Caco-2 (cell line): ENCODE measurements at regions of chr4 and their contacts with region 1.

Region 1: DNA sequence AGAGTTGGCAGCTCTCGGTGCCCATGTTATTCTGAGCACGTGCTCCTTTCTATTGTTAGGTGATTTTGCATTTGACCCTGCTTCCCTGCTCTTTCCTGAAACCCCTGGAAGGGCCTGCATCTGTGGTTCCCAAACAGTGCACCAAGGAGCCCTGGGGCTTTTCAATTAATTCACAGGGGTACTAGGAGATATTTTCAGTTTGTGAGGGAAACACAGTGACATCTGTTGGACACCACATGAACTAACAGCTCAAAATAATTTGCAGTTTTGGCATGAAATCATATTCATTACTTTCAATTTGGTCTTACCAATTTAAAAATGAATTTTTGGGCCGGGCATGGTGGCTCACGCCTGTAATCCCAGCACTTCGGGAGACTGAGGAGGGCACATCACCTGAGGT is 156.6 kb downstream of the GATB start:
- DNase-seq: no peak
- H3K4me3 ChIP-seq: no peak overlapping the region
- H3K4me3 Mint-ChIP-seq: no peak overlapping the region
- H3K27ac Mint-ChIP-seq: no peak overlapping the region
- H3K4me1 ChIP-seq: peaks cover 18% of the 10 kb centered on the region
- H3K4me1 Mint-ChIP-seq: peaks cover 3% of the 10 kb centered on the region
- H3K27me3 ChIP-seq: no peaks in the 10 kb centered on the region
- H3K27me3 Mint-ChIP-seq: no peaks in the 10 kb centered on the region
- CTCF ChIP-seq: peak; percentile 23 to 62

Region 2: DNA sequence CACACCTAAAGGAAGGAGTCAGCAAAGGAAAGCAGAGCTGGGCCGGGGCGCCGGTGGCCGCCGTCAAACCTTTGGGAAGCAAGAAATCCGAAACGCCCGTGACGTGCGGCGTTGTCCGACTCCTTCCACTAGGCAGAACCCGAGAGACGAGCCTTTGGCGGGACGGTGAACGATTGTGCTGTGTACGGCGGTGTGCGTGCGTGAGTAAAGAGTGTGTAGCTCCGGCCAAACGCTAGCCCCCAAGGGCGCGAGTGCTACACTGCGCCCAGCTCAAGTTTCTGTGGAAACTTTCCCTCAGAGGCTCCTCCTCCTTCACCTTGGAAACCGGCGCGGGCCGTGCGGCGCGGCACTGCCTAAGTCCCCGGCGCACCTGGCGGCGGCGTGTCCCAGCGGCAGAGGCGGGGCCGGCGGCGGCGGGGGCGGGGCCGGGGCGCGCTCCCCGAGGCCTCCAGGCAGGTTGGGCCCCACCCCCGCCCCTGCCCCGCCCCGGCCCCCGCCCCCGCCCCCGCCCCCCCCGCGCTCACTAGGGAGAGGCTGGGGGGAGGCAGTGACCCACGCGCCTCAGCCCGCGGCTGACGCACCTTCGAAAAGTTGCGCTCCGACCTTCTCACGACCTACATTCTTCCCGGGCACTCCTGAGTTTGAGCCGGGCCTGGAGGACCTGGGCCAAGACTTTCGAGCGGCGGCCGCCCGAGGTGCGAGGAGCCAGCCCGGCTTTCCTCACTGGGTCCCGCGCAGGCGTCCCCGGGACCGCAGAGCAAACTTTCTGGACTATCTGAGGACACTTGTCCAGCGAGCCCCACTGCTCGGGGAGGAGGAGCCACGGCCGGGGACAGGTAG is 195.4 kb before region 1 on chr4 and contains the start of gene FHIP1A:
- CTCF ChIA-PET with region 1: no interaction called
- POLR2A ChIA-PET with region 1: interaction called, 3 read pairs
- intact Hi-C with region 1: loop called (anchors 5 kb)
- DNase-seq: peak; percentile 95 to 96
- H3K4me3 ChIP-seq: peak within 1 kb of the TSS; percentile 80
- H3K4me3 Mint-ChIP-seq: peak within 1 kb of the TSS; percentile 86
- H3K27ac Mint-ChIP-seq: peak within 1 kb of the TSS; percentile 85
- H3K4me1 ChIP-seq: peaks cover 11% of the 10 kb centered on the region; the same call in 1 of the 2 replicates
- H3K4me1 Mint-ChIP-seq: no peaks in the 10 kb centered on the region
- H3K27me3 ChIP-seq: no peaks in the 10 kb centered on the region
- H3K27me3 Mint-ChIP-seq: no peaks in the 10 kb centered on the region
- CTCF ChIP-seq: peak in 1 of 2 experiments; percentile 12
- total RNA-seq, gene FHIP1A: 18.9 and 22.3 TPM in 2 replicates

Region 3: DNA sequence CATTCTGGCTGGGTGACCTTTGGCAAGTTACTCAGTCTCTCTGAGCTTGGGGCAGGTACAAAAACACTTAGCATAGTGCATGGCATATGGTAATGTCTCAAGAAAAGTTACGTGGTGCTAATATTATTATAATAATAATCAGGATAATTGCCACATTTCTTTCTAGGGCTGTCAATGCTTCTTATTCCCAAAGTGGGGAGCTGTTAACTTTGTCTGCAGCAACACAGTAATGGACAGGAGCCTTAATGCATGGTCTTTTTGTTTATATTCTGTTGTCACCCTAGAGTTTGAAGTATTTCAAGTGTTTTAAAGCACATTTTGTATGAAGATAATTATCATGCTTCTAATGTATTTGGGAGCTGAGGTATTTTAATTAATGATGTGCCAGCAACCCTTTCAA is 73.5 kb before region 1 on chr4:
- CTCF ChIA-PET with region 1: no interaction called
- POLR2A ChIA-PET with region 1: no interaction called
- intact Hi-C with region 1: loop called (anchors 2 kb)
- DNase-seq: no peak
- H3K4me3 ChIP-seq: no peak overlapping the region
- H3K4me3 Mint-ChIP-seq: no peak overlapping the region
- H3K27ac Mint-ChIP-seq: no peak overlapping the region
- H3K4me1 ChIP-seq: no peaks in the 10 kb centered on the region
- H3K4me1 Mint-ChIP-seq: no peaks in the 10 kb centered on the region
- H3K27me3 ChIP-seq: no peaks in the 10 kb centered on the region
- H3K27me3 Mint-ChIP-seq: no peaks in the 10 kb centered on the region
- CTCF ChIP-seq: peak in 1 of 2 experiments; percentile 2

Region 4: DNA sequence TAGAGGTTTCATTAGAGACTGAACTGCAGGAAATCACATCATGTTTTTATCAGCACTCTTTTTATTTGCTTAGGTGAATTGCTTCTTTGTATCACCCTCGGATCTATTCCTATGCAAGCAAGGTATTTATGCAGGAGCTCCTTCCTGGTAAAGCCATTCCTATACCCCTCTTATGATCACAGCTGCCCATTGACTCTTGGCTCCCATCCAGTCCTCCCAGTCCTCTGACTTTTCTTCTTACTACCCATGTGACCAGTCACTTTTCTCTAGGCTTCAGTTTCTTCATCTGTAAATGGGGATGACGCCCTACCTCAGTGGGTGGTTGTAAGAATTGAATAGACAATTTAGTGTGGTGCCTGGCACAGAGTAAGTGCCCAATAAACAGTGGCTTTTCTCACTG is 50.4 kb before region 1 on chr4:
- CTCF ChIA-PET with region 1: no interaction called
- POLR2A ChIA-PET with region 1: no interaction called
- intact Hi-C with region 1: no loop called
- DNase-seq: no peak
- H3K4me3 ChIP-seq: no peak overlapping the region
- H3K4me3 Mint-ChIP-seq: no peak overlapping the region
- H3K27ac Mint-ChIP-seq: no peak overlapping the region
- H3K4me1 ChIP-seq: no peaks in the 10 kb centered on the region
- H3K4me1 Mint-ChIP-seq: no peaks in the 10 kb centered on the region
- H3K27me3 ChIP-seq: no peaks in the 10 kb centered on the region
- H3K27me3 Mint-ChIP-seq: no peaks in the 10 kb centered on the region
- CTCF ChIP-seq: no peak

Region 5: DNA sequence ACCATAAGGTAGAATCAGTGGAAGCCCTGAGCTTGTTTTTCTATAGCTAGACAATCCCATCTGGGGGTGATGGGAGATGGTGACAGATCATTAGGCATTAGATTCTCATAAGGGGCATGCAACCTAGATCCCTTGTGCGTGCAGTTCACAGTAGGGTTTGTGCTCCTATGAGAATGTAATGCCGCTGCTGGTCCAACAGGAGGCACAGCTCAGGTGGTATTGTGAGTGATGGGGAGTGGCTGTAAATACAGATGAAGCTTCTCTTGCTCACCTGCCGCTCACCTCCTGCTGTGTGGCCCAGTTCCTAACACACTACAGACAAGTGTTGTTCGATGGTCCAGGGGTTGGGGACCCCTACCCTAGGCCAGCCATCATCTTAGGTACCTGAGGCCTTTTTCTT is 162.5 kb after region 1 on chr4:
- CTCF ChIA-PET with region 1: no interaction called
- POLR2A ChIA-PET with region 1: no interaction called
- intact Hi-C with region 1: no loop called
- DNase-seq: no peak
- H3K4me3 ChIP-seq: no peak overlapping the region
- H3K4me3 Mint-ChIP-seq: no peak overlapping the region
- H3K27ac Mint-ChIP-seq: no peak overlapping the region
- H3K4me1 ChIP-seq: no peaks in the 10 kb centered on the region
- H3K4me1 Mint-ChIP-seq: peaks cover 5% of the 10 kb centered on the region
- H3K27me3 ChIP-seq: no peaks in the 10 kb centered on the region
- H3K27me3 Mint-ChIP-seq: peaks cover 8% of the 10 kb centered on the region
- CTCF ChIP-seq: no peak

Region 6: GRCh38 chr4:151957153-151957552 is 352.9 kb after region 1 on chr4:
- CTCF ChIA-PET with region 1: no interaction called
- POLR2A ChIA-PET with region 1: no interaction called
- intact Hi-C with region 1: no loop called
- DNase-seq: peak; percentile 90 to 96
- H3K4me3 ChIP-seq: no peak overlapping the region
- H3K4me3 Mint-ChIP-seq: peak overlapping the region; percentile 42
- H3K27ac Mint-ChIP-seq: peak overlapping the region; percentile 78
- H3K4me1 ChIP-seq: peaks cover 29% of the 10 kb centered on the region
- H3K4me1 Mint-ChIP-seq: peaks cover 29% of the 10 kb centered on the region
- H3K27me3 ChIP-seq: no peaks in the 10 kb centered on the region
- H3K27me3 Mint-ChIP-seq: no peaks in the 10 kb centered on the region
- CTCF ChIP-seq: peak; percentile 49 to 53